ENCODE measurements at regions of chr12 and their contacts with region 1.

Region 1: GRCh38 chr12:95117178-95117599 is 43.8 kb upstream of the NR2C1 start:
- DNase-seq: peak; percentile 21 to 78 (median 67)
- ATAC-seq: peak; percentile 83
- H3K4me3 ChIP-seq: no peak overlapping the region
- H3K4me3 Mint-ChIP-seq: no peak overlapping the region
- H3K27ac ChIP-seq: no peak overlapping the region
- H3K27ac Mint-ChIP-seq: no peak overlapping the region
- H3K4me1 ChIP-seq: no peaks in the 10 kb centered on the region
- H3K4me1 Mint-ChIP-seq: no peaks in the 10 kb centered on the region
- H3K27me3 ChIP-seq: no peaks in the 10 kb centered on the region
- H3K27me3 Mint-ChIP-seq: no peaks in the 10 kb centered on the region
- CTCF ChIP-seq: peak; percentile 75

Region 2: GRCh38 chr12:93550748-93551611 is 1566.2 kb before region 1 on chr12:
- CTCF ChIA-PET with region 1: no interaction called
- POLR2A ChIA-PET with region 1: no interaction called
- intact Hi-C with region 1: no loop called
- DNase-seq: no peak
- ATAC-seq: no peak
- H3K4me3 ChIP-seq: no peak overlapping the region
- H3K4me3 Mint-ChIP-seq: no peak overlapping the region
- H3K27ac ChIP-seq: no peak overlapping the region
- H3K27ac Mint-ChIP-seq: no peak overlapping the region
- H3K4me1 ChIP-seq: no peaks in the 10 kb centered on the region
- H3K4me1 Mint-ChIP-seq: no peaks in the 10 kb centered on the region
- H3K27me3 ChIP-seq: no peaks in the 10 kb centered on the region
- H3K27me3 Mint-ChIP-seq: no peaks in the 10 kb centered on the region
- CTCF ChIP-seq: no peak

Region 3: GRCh38 chr12:94372461-94372860 is 744.7 kb before region 1 on chr12:
- CTCF ChIA-PET with region 1: no interaction called
- POLR2A ChIA-PET with region 1: no interaction called
- intact Hi-C with region 1: no loop called
- DNase-seq: no peak
- ATAC-seq: no peak
- H3K4me3 ChIP-seq: no peak overlapping the region
- H3K4me3 Mint-ChIP-seq: no peak overlapping the region
- H3K27ac ChIP-seq: no peak overlapping the region
- H3K27ac Mint-ChIP-seq: no peak overlapping the region
- H3K4me1 ChIP-seq: no peaks in the 10 kb centered on the region
- H3K4me1 Mint-ChIP-seq: peaks cover 1% of the 10 kb centered on the region
- H3K27me3 ChIP-seq: no peaks in the 10 kb centered on the region
- H3K27me3 Mint-ChIP-seq: no peaks in the 10 kb centered on the region
- CTCF ChIP-seq: no peak

Region 4: DNA sequence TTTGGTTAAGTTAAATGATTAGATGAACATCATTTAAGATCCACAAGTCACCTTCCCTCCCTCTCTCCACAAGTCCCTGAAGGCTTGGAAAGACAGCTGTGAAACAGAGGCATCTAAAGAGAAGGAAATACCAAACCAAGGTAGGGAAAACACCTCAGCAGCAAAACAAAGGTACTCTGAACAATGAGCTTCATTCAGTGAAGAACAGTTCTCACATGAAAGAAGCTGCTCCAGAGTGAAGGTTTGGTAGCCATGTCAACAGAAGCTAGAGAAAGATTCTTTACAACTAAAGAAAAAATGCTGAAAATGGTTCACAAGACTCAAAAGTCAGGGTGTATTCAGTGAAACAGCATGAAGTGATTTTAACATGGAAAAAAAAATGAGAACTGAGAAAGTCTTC is 30.7 kb after region 1 on chr12:
- CTCF ChIA-PET with region 1: no interaction called
- POLR2A ChIA-PET with region 1: no interaction called
- intact Hi-C with region 1: no loop called
- DNase-seq: no peak
- ATAC-seq: no peak
- H3K4me3 ChIP-seq: no peak overlapping the region
- H3K4me3 Mint-ChIP-seq: no peak overlapping the region
- H3K27ac ChIP-seq: no peak overlapping the region
- H3K27ac Mint-ChIP-seq: no peak overlapping the region
- H3K4me1 ChIP-seq: no peaks in the 10 kb centered on the region
- H3K4me1 Mint-ChIP-seq: no peaks in the 10 kb centered on the region
- H3K27me3 ChIP-seq: no peaks in the 10 kb centered on the region
- H3K27me3 Mint-ChIP-seq: no peaks in the 10 kb centered on the region
- CTCF ChIP-seq: no peak

Region 5: GRCh38 chr12:95336390-95337067 is 219.3 kb after region 1 on chr12:
- CTCF ChIA-PET with region 1: interaction called, 9 read pairs
- POLR2A ChIA-PET with region 1: no interaction called
- intact Hi-C with region 1: loop called in 1 of 2 experiments (anchors 1 kb)
- DNase-seq: no peak
- ATAC-seq: no peak
- H3K4me3 ChIP-seq: no peak overlapping the region
- H3K4me3 Mint-ChIP-seq: no peak overlapping the region
- H3K27ac ChIP-seq: no peak overlapping the region
- H3K27ac Mint-ChIP-seq: no peak overlapping the region
- H3K4me1 ChIP-seq: no peaks in the 10 kb centered on the region
- H3K4me1 Mint-ChIP-seq: peaks cover 4% of the 10 kb centered on the region
- H3K27me3 ChIP-seq: no peaks in the 10 kb centered on the region
- H3K27me3 Mint-ChIP-seq: no peaks in the 10 kb centered on the region
- CTCF ChIP-seq: no peak

Region 6: GRCh38 chr12:95532851-95533250 is 415.7 kb after region 1 on chr12:
- CTCF ChIA-PET with region 1: interaction called, 103 read pairs
- POLR2A ChIA-PET with region 1: no interaction called
- intact Hi-C with region 1: loop called (anchors 1 kb)
- DNase-seq: no peak
- ATAC-seq: no peak
- H3K4me3 ChIP-seq: no peak overlapping the region
- H3K4me3 Mint-ChIP-seq: no peak overlapping the region
- H3K27ac ChIP-seq: no peak overlapping the region
- H3K27ac Mint-ChIP-seq: no peak overlapping the region
- H3K4me1 ChIP-seq: no peaks in the 10 kb centered on the region
- H3K4me1 Mint-ChIP-seq: peaks cover 12% of the 10 kb centered on the region
- H3K27me3 ChIP-seq: no peaks in the 10 kb centered on the region
- H3K27me3 Mint-ChIP-seq: peaks cover 2% of the 10 kb centered on the region
- CTCF ChIP-seq: no peak

Region 7: GRCh38 chr12:95538656-95539055 is 421.5 kb after region 1 on chr12:
- CTCF ChIA-PET with region 1: interaction called, 103 read pairs
- POLR2A ChIA-PET with region 1: interaction called, 4 read pairs
- intact Hi-C with region 1: loop called (anchors 1 kb)
- DNase-seq: no peak
- ATAC-seq: no peak
- H3K4me3 ChIP-seq: no peak overlapping the region
- H3K4me3 Mint-ChIP-seq: no peak overlapping the region
- H3K27ac ChIP-seq: no peak overlapping the region
- H3K27ac Mint-ChIP-seq: no peak overlapping the region
- H3K4me1 ChIP-seq: no peaks in the 10 kb centered on the region
- H3K4me1 Mint-ChIP-seq: peaks cover 2% of the 10 kb centered on the region
- H3K27me3 ChIP-seq: no peaks in the 10 kb centered on the region
- H3K27me3 Mint-ChIP-seq: peaks cover 2% of the 10 kb centered on the region
- CTCF ChIP-seq: no peak

Region 8: GRCh38 chr12:95820102-95820703 is 703.0 kb after region 1 on chr12:
- CTCF ChIA-PET with region 1: no interaction called
- POLR2A ChIA-PET with region 1: no interaction called
- intact Hi-C with region 1: loop called (anchors 2 kb)
- DNase-seq: peak in 2 of 9 experiments; percentile 16 to 24
- ATAC-seq: no peak
- H3K4me3 ChIP-seq: no peak overlapping the region
- H3K4me3 Mint-ChIP-seq: no peak overlapping the region
- H3K27ac ChIP-seq: no peak overlapping the region
- H3K27ac Mint-ChIP-seq: no peak overlapping the region
- H3K4me1 ChIP-seq: no peaks in the 10 kb centered on the region
- H3K4me1 Mint-ChIP-seq: no peaks in the 10 kb centered on the region
- H3K27me3 ChIP-seq: no peaks in the 10 kb centered on the region
- H3K27me3 Mint-ChIP-seq: peaks cover 17% of the 10 kb centered on the region
- CTCF ChIP-seq: no peak